K562 (cell line): ENCODE measurements at regions of chr12 and their contacts with region 1.

Region 1: DNA sequence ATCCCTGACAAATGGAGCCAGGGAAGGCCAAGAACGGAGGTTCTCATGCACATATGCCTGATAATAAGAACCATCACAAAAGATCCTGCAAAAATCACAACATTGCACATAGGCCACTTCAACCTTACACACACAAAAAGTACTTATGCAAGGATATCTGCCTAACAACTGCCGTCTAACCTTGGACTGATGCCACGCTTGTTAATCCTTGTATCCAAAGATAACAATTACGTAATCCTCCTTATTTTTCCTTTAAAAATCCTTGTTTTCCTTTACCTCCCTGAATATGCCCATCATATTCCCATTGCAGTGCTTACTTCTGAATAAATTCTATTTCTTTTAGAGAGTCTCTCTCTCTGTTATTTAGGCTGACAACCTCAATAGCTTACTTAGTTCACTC is 59.5 kb downstream of the TMEM116 start:
- DNase-seq: no peak
- ATAC-seq: no peak
- H3K4me3 ChIP-seq: no peak overlapping the region
- H3K27ac ChIP-seq: no peak overlapping the region
- H3K4me1 ChIP-seq: peaks cover 0 to 5% of the 10 kb centered on the region in 2 experiments; a peak in 2 of 5 replicates
- H3K27me3 ChIP-seq: no peaks in the 10 kb centered on the region
- CTCF ChIP-seq: no peak
- EP300 ChIP-seq: no peak
- POLR2A ChIP-seq: no peak
- RAD21 ChIP-seq: no peak

Region 2: DNA sequence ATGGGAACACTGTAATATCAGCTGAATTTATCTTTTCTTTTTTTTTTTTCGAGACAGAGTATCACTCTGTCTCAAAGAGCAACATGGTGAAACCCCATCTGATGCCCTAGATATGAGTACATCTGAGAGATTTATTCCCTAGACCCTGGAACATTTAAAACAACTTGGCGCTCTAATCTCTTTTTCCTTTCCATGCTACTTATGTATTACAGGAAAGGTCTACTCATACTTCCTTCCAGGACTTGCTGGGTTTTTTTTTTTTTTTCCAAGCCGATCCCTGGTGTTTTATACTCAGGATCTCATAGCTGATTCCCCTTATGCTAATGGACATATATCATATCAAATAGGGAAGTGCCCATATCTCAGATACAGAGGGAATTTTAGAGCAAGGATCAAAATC is 28.3 kb before region 1 on chr12:
- CTCF ChIA-PET with region 1: no interaction called
- POLR2A ChIA-PET with region 1: no interaction called
- in situ Hi-C with region 1: no loop called
- intact Hi-C with region 1: no loop called
- DNase-seq: no peak
- ATAC-seq: no peak
- H3K4me3 ChIP-seq: no peak overlapping the region
- H3K27ac ChIP-seq: no peak overlapping the region
- H3K4me1 ChIP-seq: no peaks in the 10 kb centered on the region
- H3K27me3 ChIP-seq: no peaks in the 10 kb centered on the region
- CTCF ChIP-seq: no peak
- EP300 ChIP-seq: no peak
- POLR2A ChIP-seq: no peak
- RAD21 ChIP-seq: no peak

Region 3: DNA sequence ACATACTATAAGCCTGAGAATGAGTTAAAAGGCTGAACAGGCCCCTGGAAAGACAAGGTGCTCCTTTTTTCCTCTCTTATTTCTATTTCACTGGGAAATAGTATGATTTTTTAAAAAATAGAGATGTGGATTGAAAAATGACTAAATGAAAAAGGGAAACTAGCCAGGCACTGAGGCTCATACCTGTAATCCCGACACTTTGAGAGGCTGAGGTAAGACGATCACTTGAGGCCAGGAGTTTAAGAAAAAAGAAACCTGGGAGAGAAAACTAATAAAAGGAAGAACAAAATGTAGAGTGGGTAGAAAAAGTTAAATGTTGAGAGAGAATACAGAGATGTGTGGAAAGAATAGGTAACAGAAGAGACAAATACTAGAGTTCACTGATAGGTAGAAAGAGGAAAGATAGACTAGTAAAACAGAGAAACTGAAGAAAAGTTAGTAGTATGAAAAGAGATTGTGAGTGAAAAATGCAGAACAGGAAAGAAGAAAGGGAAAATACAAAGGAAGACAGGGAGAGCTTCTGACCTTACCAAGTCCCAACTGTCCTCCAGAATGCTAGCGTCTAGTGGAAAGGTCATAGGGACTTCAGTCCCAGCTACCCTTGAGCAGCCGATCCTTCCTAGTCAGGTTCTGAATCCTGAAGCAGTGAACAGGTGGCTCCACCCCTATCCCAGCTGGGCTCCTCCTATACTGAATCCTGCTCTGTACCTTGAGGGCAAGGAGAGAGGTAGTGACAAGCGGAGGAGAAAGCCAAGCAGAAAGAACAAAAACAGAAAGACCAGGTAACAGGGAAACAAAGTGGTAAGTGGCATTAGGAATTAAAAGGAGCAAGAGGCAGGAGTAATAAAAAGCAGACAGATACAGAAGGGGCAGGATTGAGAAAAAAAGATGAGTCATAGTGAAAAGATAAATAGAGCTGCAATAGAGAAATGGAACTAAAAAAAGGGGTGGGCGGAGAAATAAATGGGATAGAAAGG is 52.3 kb after region 1 on chr12:
- CTCF ChIA-PET with region 1: no interaction called
- POLR2A ChIA-PET with region 1: no interaction called
- in situ Hi-C with region 1: loop called (anchors 5 kb)
- intact Hi-C with region 1: no loop called
- DNase-seq: peak; percentile 58 to 78 (median 66)
- ATAC-seq: peak; percentile 88
- H3K4me3 ChIP-seq: peak overlapping the region; percentile 28
- H3K27ac ChIP-seq: peak overlapping the region; percentile 66
- H3K4me1 ChIP-seq: peaks cover 18 to 25% of the 10 kb centered on the region in 2 experiments; a peak in 4 of 5 replicates
- H3K27me3 ChIP-seq: no peaks in the 10 kb centered on the region
- CTCF ChIP-seq: no peak
- EP300 ChIP-seq: no peak
- POLR2A ChIP-seq: peak; percentile 63
- RAD21 ChIP-seq: no peak

Region 4: DNA sequence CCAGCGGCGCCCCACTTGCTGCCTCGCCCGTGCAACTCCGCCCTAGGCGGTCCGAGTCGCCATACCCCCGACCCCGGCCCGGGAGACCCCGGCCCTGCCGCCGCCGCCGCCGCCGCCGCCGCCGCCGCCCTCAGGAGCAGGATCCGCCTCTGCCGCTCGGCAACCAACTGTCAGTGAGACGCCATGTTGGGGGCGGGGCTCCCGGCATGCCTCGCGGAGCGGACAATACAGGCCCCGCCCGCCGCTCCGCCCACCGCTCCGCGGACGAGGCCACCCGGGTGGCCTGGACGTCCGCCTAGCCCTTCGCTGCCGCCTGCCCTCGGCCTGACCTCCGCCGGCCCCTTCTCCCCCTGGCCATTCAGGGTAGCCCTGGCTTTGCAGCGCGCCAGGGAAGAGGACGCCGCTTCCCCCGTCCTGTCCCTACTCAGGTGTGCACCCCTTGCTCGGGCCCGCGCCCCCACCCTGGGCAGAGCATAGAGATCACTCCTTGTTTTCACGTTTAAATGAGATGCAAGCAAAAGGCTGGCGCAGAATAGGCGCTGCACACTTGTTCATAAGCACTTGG is 428.9 kb after region 1 on chr12 and contains the start of gene HECTD4:
- CTCF ChIA-PET with region 1: no interaction called
- POLR2A ChIA-PET with region 1: no interaction called
- in situ Hi-C with region 1: no loop called
- intact Hi-C with region 1: no loop called
- DNase-seq: peak; percentile 95 to 97 (median 96)
- ATAC-seq: peak; percentile 96
- H3K4me3 ChIP-seq: peak within 1 kb of the TSS; percentile 98
- H3K27ac ChIP-seq: peak within 1 kb of the TSS; percentile 89
- H3K4me1 ChIP-seq: peaks cover 24 to 32% of the 10 kb centered on the region in 2 experiments
- H3K27me3 ChIP-seq: no peaks in the 10 kb centered on the region
- CTCF ChIP-seq: no peak
- EP300 ChIP-seq: no peak
- POLR2A ChIP-seq: peak; percentile 90
- RAD21 ChIP-seq: no peak
- polyA plus RNA-seq, gene HECTD4: 3.5 to 4.5 TPM